ENCODE measurements at regions of chrX and their contacts with region 1.

Region 1: GRCh38 chrX:23035493-23035892 is 35.7 kb downstream of the DDX53 start:
- DNase-seq: no peak
- H3K4me3 ChIP-seq: no peak overlapping the region
- H3K27ac ChIP-seq: no peak overlapping the region
- H3K4me1 ChIP-seq: no peaks in the 10 kb centered on the region
- H3K27me3 ChIP-seq: no peaks in the 10 kb centered on the region
- CTCF ChIP-seq: no peak

Region 2: GRCh38 chrX:23134136-23134535 is 98.6 kb after region 1 on chrX:
- CTCF ChIA-PET with region 1: no interaction called
- POLR2A ChIA-PET with region 1: interaction called, 11 read pairs
- intact Hi-C with region 1: no loop called
- DNase-seq: no peak
- H3K4me3 ChIP-seq: no peak overlapping the region
- H3K27ac ChIP-seq: no peak overlapping the region
- H3K4me1 ChIP-seq: no peaks in the 10 kb centered on the region
- H3K27me3 ChIP-seq: no peaks in the 10 kb centered on the region
- CTCF ChIP-seq: no peak

Measured in PC-9 (cell line).